G401 (cell line): ENCODE measurements at regions of chr1 and their contacts with region 1.

Region 1: DNA sequence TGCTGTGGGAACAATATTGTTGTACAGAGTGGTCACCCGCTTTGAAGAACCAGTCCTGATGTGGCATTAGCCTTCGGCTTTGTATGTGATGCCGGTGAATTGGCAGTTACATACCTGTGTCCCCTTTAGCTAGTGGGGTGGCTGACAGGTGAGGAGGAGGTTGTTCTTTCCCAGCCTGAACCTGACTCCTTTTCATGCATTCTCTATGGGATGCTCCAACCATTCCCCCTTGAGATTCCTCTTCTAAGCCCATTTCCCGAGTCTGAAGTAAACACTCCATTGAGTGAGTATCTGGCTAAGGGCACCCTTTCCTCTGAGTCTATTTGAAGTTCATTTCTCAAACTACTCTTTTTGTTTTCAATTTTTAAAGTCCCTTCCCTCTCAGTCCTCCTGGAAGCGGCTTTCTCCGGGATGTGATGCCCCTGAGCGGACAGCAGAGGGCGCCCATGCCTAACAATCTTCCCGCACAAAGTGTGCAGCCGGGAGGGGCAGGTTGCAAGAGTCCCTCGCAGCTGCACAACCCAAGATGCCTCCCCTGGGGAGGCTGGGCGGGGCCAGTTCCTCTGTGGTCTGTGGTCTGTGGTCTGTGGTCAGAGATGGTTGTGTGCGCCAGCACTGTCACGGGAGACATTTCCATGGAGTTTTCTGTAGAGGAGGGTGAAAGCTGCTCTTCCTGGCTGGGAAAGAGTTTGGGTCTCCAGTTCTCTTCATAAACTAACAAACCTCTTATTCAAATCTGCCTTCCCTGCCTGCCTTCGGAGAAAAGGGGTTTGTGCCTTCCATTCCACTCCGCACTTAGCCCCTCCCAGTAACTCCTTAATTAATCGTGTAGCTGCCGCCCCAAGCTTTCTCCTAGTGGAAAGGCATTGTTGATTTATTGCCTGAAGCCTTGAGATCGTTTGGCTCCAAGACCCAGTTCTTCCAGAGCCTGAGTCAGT is 36.4 kb upstream of the LMX1A start:
- DNase-seq: peak; percentile 65

Region 2: DNA sequence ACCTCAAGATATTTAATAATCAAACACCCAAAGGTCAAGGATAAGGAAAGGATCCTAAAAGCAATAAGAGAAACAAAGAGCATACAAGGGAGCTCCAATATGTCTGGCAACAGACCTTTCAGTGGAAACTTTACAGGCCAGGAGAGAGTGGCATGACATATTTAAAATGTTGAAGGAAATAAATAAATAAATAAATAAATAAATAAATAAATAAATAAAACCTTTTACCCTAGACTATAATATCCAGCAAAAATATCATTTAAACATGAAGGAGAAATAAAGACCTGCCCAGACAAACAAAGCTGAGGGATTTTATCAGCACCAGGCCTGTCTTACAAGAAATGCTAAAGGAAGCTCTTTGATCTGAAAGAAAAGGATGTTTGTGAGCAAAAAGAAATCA is 1201.7 kb before region 1 on chr1:
- in situ Hi-C with region 1: no loop called
- DNase-seq: no peak

Region 3: DNA sequence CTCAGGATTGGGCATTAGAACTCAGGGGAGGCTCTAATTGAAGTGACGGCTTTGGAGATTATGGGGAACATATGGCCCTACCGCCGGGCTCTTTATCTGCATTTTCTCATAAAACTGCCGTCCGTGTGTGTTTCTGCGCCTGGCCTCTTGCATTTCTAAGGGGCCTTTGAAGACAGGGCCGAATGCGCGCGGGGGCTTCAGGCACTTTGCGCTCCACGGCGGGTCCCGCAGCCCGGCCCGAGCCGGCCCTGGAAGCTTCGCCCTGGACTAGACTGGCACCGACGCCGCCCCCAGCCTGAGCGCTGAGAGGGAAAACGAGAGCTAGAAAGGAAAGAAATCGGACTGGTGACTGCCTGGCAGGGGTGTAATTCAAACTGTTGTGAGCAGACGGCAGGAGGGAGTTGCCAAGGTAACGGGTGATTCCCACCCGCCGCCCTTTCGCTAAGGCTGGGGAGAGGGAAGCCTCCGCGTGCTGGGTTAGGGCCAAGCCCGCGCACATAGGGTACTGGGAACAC is 157.1 kb before region 1 on chr1:
- in situ Hi-C with region 1: no loop called
- DNase-seq: peak; percentile 47

Region 4: GRCh38 chr1:165288350-165289148 is 104.4 kb before region 1 on chr1:
- in situ Hi-C with region 1: no loop called
- DNase-seq: no peak

Region 5: DNA sequence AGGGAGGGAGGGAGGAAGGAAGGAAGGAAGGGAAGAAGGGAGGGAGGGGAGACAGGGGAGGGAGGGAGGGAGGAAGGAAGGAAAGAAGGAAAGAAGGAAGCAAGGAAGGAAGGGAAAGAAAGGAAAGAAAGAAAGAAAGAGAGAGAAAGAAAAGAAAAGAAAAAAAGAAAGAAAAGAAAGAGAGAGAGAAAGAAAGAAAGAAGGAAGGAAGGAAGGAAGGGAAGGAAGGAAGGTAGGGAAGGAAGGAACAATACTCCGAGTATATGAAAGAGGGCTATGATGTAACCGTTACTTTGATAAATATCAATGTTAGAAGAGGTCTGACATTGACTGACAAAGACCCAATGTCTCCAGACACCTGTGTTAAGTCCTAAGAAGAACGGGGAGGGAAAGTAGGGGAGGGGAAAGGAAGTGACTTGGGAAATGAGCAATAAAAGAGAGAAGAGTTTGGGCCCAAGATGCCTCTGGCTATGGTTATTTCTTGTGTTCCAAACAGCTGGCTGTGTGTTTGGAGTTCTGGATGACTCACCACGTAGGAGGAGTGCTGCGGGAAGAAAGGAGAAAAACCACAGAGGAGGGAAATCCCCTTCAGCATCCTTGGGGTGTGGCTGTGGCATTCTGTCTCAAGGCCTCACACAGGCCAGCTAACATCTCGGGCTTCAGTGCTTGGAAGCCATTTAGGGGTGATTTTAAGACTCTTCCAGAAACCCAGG is 89.1 kb after region 1 on chr1:
- in situ Hi-C with region 1: no loop called
- DNase-seq: no peak

Region 6: GRCh38 chr1:165597883-165598675 is 205.2 kb after region 1 on chr1:
- in situ Hi-C with region 1: loop called (anchors 25 kb)
- DNase-seq: peak; percentile 98